GM12878 (cell line): ENCODE measurements at regions of chr6 and their contacts with region 1.

Region 1: DNA sequence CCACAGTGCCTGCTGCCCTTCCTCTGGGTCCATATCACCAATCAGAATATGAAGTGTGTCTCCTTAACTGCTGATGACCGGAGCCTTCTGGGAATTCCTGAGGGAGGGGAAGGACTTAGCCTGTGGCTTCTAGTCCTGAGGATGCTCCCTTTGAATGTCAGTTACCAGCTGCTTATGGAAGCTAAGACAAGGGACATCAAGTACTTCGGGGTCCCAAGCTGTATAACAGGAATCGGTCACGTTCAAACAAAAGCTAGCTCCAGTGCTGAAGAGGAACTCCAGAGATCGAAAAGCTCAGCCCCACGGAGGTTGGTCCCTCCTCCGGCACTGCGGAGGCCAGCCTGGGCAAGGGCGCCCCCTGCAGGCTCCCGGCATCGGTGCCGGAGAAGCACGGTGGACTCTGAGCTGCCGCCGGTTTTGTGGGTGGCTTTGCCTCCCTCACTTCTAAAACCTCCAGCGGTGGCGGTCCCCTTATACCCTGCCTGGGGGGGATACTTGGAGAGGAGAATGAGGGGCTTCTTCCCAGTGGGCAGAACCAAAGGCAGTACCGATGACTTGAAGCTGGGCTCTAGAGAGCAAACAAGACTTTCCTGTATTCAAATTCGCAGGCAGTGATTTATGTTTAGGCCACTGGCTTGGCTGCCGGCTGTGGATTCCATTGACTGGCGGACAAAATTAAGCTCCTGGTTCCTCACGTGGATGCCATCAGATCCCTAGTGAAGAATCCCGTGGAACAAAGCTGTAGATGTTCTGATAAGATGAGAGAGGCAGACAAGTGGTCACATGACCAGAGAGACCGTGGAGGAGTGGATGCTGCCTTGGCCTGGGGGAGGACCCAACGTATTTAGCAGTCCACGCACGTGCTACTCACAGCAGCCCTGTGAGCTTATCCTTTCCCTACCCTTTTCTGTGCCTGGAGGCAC is 16.2 kb upstream of the UBR2 start:
- DNase-seq: no peak
- ATAC-seq: peak; percentile 100
- H3K4me3 ChIP-seq: peak overlapping the region; percentile 59
- H3K27ac ChIP-seq: no peak overlapping the region
- H3K4me1 ChIP-seq: peaks cover 10% of the 10 kb centered on the region
- H3K27me3 ChIP-seq: no peaks in the 10 kb centered on the region
- CTCF ChIP-seq: peak; percentile 99; a peak in 5 of 6 replicates
- EP300 ChIP-seq: no peak
- POLR2A ChIP-seq: no peak; the same call in 1 of the 2 replicates
- RAD21 ChIP-seq: peak; percentile 99

Region 2: DNA sequence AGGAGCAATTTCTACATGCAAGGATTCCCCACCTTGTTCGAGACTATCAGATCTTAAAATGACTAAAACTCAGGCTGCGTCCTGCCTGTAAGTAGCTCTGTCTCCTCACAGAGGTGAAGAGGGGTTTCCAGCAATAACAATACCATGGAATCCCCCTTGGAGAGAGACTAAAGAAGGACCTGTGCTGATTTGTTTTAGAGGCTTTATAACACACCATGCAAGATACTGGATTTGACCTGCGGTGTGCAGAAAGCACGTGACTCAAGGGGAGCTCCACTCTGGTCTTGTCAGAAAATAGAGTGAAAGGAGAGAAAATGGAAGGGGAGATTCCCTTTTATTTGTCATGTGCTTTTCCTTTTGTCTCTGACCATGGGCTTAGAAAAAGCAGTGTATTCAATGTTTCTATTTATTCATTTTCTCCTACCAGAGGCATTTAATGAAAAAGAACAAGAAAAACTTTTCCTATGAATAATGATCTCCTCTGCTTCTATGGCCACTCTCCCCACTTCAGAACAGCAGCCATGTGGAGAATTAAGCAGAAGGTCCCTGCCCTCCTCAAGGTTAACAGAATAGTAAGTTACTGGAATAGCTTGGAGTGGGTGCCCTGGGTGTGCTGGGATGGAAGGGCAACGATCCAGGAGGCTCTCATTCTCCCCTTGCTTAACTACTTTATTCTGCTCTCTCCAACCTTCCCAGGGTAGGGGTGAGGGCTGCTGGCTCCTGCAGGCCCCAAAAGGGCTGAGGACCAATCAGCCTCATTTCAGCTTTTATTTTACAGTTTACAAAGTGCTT is 310.8 kb before region 1 on chr6:
- CTCF ChIA-PET with region 1: interaction called, 16 read pairs
- POLR2A ChIA-PET with region 1: interaction called, 3 read pairs
- RAD21 ChIA-PET with region 1: interaction called, 9 read pairs
- SMC1A ChIA-PET with region 1: interaction called, 3 read pairs
- in situ Hi-C with region 1: no loop called
- intact Hi-C with region 1: no loop called
- DNase-seq: peak; percentile 41
- ATAC-seq: peak; percentile 90
- H3K4me3 ChIP-seq: peak overlapping the region; percentile 23; the same call in 1 of the 2 replicates
- H3K27ac ChIP-seq: peak overlapping the region; percentile 68
- H3K4me1 ChIP-seq: peaks cover 36% of the 10 kb centered on the region
- H3K27me3 ChIP-seq: no peaks in the 10 kb centered on the region
- CTCF ChIP-seq: no peak
- EP300 ChIP-seq: peak; percentile 8 to 26; a peak in 2 of 4 replicates
- POLR2A ChIP-seq: no peak
- RAD21 ChIP-seq: peak; percentile 10; the same call in 1 of the 2 replicates

Region 3: GRCh38 chr6:42315991-42316378 is 231.7 kb before region 1 on chr6:
- CTCF ChIA-PET with region 1: interaction called, 51 read pairs
- POLR2A ChIA-PET with region 1: no interaction called
- RAD21 ChIA-PET with region 1: interaction called, 5 read pairs
- SMC1A ChIA-PET with region 1: interaction called, 5 read pairs
- in situ Hi-C with region 1: no loop called
- intact Hi-C with region 1: no loop called
- DNase-seq: no peak
- ATAC-seq: peak; percentile 78
- H3K4me3 ChIP-seq: no peak overlapping the region
- H3K27ac ChIP-seq: no peak overlapping the region
- H3K4me1 ChIP-seq: peaks cover 14% of the 10 kb centered on the region
- H3K27me3 ChIP-seq: no peaks in the 10 kb centered on the region
- CTCF ChIP-seq: no peak
- EP300 ChIP-seq: no peak
- POLR2A ChIP-seq: no peak
- RAD21 ChIP-seq: no peak

Region 4: DNA sequence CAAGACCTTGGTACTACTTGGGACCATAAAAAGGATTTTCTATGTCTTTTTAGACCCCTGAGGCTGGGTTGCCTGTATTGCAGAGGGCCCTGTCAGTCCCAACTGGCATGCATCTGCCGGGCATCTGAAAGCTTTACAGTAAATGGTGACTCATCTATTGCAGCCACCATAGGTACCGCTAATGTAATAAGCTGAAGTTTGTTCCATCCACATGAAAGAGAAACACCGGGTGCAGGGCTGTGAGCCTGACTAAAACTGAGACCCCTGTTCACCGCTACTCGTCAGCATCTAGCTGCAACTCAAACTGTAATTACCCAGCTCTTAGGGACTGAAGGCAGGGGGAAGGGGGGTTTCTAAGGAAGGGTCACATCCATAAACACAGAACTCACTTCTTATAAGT is 145.5 kb before region 1 on chr6:
- CTCF ChIA-PET with region 1: interaction called, 16 read pairs
- POLR2A ChIA-PET with region 1: no interaction called
- RAD21 ChIA-PET with region 1: interaction called, 15 read pairs
- SMC1A ChIA-PET with region 1: interaction called, 4 read pairs
- in situ Hi-C with region 1: no loop called
- intact Hi-C with region 1: loop called (anchors 5 kb)
- DNase-seq: peak; percentile 74
- ATAC-seq: peak; percentile 99
- H3K4me3 ChIP-seq: no peak overlapping the region
- H3K27ac ChIP-seq: no peak overlapping the region
- H3K4me1 ChIP-seq: peaks cover 12% of the 10 kb centered on the region
- H3K27me3 ChIP-seq: no peaks in the 10 kb centered on the region
- CTCF ChIP-seq: no peak
- EP300 ChIP-seq: peak; percentile 91 to 93
- POLR2A ChIP-seq: no peak
- RAD21 ChIP-seq: peak; percentile 28; the same call in 1 of the 2 replicates

Region 5: GRCh38 chr6:42460883-42461282 is 86.8 kb before region 1 on chr6:
- CTCF ChIA-PET with region 1: interaction called, 13 read pairs
- POLR2A ChIA-PET with region 1: no interaction called
- RAD21 ChIA-PET with region 1: interaction called, 31 read pairs
- SMC1A ChIA-PET with region 1: interaction called, 8 read pairs
- in situ Hi-C with region 1: no loop called
- intact Hi-C with region 1: no loop called
- DNase-seq: no peak
- ATAC-seq: no peak
- H3K4me3 ChIP-seq: no peak overlapping the region
- H3K27ac ChIP-seq: no peak overlapping the region
- H3K4me1 ChIP-seq: no peaks in the 10 kb centered on the region
- H3K27me3 ChIP-seq: no peaks in the 10 kb centered on the region
- CTCF ChIP-seq: no peak
- EP300 ChIP-seq: no peak
- POLR2A ChIP-seq: no peak
- RAD21 ChIP-seq: no peak

Region 6: DNA sequence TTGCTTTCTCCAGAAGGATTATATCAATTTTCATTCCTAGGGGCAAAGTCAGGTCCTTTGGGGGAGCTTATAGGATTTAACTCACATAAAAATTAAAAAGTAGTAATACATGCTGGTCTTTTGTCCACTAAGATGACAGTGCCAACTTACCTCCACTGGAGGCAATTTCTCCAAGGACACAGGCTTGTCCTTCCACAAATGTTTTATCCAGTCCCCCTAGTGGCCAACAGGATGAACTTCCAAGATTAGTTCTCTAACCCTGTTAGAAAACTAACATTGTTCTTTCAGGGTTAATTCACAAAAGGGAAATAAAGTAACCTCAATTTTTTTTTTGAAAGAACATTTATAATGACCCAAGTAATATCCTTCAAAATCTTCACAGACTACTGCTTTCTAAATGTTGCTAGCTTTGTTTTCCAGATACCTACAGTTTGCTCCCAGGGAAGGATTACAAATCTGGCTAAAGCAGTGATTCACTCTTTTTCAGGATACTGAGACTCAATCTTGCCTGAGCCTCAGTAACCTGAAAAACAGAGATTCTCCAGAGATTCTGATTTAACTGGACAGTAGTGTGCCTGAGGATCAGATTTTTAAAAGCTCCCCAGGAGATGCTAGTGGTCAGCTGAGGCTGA is 15.5 kb before region 1 on chr6:
- CTCF ChIA-PET with region 1: interaction called, 45 read pairs
- POLR2A ChIA-PET with region 1: no interaction called
- RAD21 ChIA-PET with region 1: interaction called, 27 read pairs
- SMC1A ChIA-PET with region 1: interaction called, 36 read pairs
- in situ Hi-C with region 1: no loop called
- intact Hi-C with region 1: no loop called
- DNase-seq: no peak
- ATAC-seq: peak; percentile 92
- H3K4me3 ChIP-seq: no peak overlapping the region
- H3K27ac ChIP-seq: no peak overlapping the region
- H3K4me1 ChIP-seq: no peaks in the 10 kb centered on the region
- H3K27me3 ChIP-seq: no peaks in the 10 kb centered on the region
- CTCF ChIP-seq: peak; percentile 74 to 89 (median 75)
- EP300 ChIP-seq: no peak
- POLR2A ChIP-seq: no peak
- RAD21 ChIP-seq: peak; percentile 84

Region 7: GRCh38 chr6:43070028-43070632 is 522.5 kb after region 1 on chr6:
- CTCF ChIA-PET with region 1: no interaction called
- POLR2A ChIA-PET with region 1: no interaction called
- RAD21 ChIA-PET with region 1: no interaction called
- SMC1A ChIA-PET with region 1: no interaction called
- in situ Hi-C with region 1: no loop called
- intact Hi-C with region 1: no loop called
- DNase-seq: no peak
- ATAC-seq: peak; percentile 95
- H3K4me3 ChIP-seq: no peak overlapping the region
- H3K27ac ChIP-seq: no peak overlapping the region
- H3K4me1 ChIP-seq: no peaks in the 10 kb centered on the region
- H3K27me3 ChIP-seq: no peaks in the 10 kb centered on the region; a peak in 1 of 4 replicates
- CTCF ChIP-seq: peak; percentile 37 to 61 (median 56); a peak in 5 of 6 replicates
- EP300 ChIP-seq: no peak
- POLR2A ChIP-seq: no peak
- RAD21 ChIP-seq: peak; percentile 78